Calu3 (cell line): ENCODE measurements at regions of chr6 and their contacts with region 1.

Region 1: DNA sequence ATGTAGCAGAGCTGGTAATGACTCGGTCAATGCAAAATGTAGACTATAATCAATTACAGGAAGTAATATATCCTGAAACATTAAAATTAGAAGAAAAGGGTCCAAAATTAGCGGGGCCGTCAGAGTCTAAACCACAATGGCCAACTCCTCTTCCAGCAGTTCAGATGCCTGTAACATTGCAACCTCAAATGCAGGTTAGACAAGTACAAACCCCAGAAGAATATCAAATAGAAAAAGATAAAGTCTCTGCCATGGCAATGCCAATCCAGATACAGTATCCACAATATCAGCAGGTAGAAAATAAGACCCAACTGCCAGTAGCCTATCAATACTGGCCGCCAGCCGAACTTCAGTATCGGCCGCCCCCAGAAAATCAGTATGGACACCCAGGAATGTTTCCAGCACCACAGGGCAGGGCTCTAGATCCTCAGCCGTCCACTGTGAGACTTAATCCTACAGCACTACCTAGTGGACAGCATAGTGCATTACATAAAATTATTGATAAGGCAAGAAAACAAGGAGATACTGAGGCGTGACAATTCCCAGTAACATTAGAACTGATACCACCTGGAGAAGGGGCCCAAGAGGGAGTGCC is 158.4 kb downstream of the GPX5 start:
- DNase-seq: peak; percentile 48
- H3K4me3 Mint-ChIP-seq: peak overlapping the region; percentile 65
- H3K27ac Mint-ChIP-seq: no peak overlapping the region
- H3K4me1 Mint-ChIP-seq: peaks cover 35% of the 10 kb centered on the region
- H3K27me3 Mint-ChIP-seq: no peaks in the 10 kb centered on the region
- CTCF ChIP-seq: peak; percentile 85

Region 2: DNA sequence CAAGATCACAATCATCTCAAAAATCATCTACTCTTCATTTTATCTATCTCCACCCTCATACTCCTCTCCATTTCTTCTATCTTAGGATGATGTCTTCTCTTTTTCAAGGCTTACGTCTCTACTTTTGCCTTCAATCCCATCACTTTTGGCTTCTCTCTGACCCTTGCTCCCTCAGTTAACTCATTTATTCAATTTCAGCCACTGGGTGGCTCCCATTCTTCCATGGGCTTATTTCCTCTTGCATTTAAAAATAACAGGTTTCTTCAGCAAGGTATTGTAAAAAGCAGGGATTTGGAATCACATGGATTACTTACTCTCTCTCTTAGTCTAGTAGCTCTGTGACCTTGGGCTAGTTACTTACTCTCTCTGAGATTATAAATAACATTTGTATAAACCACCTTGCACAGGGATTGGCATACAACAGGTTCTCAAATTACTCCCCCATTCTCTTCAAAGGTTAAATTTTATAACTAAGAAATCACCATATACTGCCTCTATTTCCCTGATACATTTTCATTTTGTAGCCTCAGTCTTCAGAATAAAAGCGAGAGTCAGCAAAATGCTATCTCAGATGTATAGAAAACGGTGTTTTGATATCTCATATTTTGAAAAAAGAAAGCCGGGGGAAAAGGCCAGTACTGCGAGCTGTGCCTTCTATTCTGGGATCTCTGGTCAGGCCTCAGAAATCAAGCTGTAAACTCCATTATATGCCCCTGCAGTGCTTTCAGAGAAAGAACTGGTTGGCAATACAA is 290.0 kb before region 1 on chr6:
- CTCF ChIA-PET with region 1: no interaction called
- intact Hi-C with region 1: loop called (anchors 1 kb)
- DNase-seq: no peak
- H3K4me3 Mint-ChIP-seq: no peak overlapping the region
- H3K27ac Mint-ChIP-seq: no peak overlapping the region
- H3K4me1 Mint-ChIP-seq: peaks cover 23% of the 10 kb centered on the region
- H3K27me3 Mint-ChIP-seq: no peaks in the 10 kb centered on the region
- CTCF ChIP-seq: no peak

Region 3: GRCh38 chr6:28496099-28496779 is 187.8 kb before region 1 on chr6:
- CTCF ChIA-PET with region 1: interaction called, 4 read pairs
- intact Hi-C with region 1: loop called (anchors 1 kb)
- DNase-seq: no peak
- H3K4me3 Mint-ChIP-seq: no peak overlapping the region
- H3K27ac Mint-ChIP-seq: no peak overlapping the region
- H3K4me1 Mint-ChIP-seq: no peaks in the 10 kb centered on the region
- H3K27me3 Mint-ChIP-seq: no peaks in the 10 kb centered on the region
- CTCF ChIP-seq: no peak

Region 4: GRCh38 chr6:28506807-28507475 is 177.1 kb before region 1 on chr6:
- CTCF ChIA-PET with region 1: no interaction called
- intact Hi-C with region 1: no loop called
- DNase-seq: no peak
- H3K4me3 Mint-ChIP-seq: no peak overlapping the region
- H3K27ac Mint-ChIP-seq: no peak overlapping the region
- H3K4me1 Mint-ChIP-seq: no peaks in the 10 kb centered on the region
- H3K27me3 Mint-ChIP-seq: peaks cover 28% of the 10 kb centered on the region
- CTCF ChIP-seq: no peak